Activated CD4-positive, alpha-beta memory T cell treated with anti-CD3 and anti-CD28 coated beads, Interleukin-2, amount 10 ng/mL, durations not matched to agents 7 days and 5 days (primary cell): ENCODE measurements at regions of chr11 and their contacts with region 1.

Region 1: DNA sequence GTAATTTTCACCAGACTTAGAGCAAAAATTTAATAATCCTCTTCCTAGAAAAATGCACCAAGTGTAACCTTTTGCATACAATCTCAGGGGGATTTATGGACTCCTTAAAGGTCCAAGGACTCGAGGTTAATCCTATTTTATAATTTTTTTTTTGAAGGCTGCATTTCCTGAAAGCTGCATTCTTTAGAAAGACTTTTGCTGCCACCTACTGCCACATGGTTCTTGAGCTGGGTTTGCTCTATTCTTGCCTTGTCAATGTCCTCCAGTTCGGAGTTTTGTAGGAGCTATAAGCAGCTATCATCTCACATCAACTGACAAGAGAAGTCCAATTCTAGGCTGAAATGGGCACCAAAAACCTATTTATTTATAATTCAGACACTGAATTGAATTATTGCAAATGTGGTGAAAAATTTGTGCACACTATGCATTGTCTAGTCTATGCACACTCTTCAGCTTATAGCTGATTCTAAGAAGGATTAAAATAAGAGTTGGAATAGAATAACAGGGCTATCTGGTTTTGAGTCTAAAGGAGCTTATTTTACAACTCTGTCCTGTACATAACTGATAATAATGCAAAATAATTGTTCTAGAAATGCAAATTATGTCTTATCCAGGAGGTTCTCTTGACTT is 31.3 kb downstream of the TRAF6 start:
- DNase-seq: peak; percentile 47
- H3K4me3 Mint-ChIP-seq: no peak overlapping the region
- H3K27ac Mint-ChIP-seq: no peak overlapping the region
- H3K4me1 Mint-ChIP-seq: peaks cover 6% of the 10 kb centered on the region
- H3K27me3 Mint-ChIP-seq: peaks cover 2% of the 10 kb centered on the region

Region 2: DNA sequence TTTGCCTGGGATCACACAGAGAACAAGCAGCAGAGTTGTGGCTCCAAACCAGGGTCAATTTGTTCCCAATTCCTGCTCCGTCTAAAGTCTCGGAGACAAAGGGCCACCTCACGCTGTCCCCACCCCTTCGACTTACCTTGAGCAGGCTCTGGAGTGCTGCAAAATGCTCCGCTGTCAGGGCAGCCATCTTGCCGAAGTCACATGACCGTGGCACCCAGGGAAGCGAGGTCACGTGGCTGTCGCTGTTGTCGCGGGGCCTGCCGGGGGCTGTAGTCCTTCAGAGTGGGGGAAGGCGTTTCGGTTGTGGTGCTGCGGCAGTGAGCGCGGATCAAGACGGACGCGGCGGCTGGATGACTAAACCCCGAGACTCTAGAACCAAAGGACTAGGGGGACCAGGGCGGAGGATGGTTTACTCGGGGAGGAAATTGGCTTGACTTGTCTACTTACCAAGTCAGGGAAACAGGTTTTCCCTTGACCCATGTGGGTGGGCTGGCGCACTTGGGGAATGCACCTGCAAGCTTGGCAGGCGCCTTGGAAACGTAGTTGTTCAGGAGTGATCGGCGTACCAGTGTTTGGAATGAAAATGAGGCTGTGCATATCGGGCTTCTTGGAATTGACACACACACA is 189.5 kb before region 1 on chr11 and contains the start of gene COMMD9:
- CTCF ChIA-PET with region 1: interaction called, 112 read pairs
- POLR2A ChIA-PET with region 1: interaction called, 4 read pairs
- DNase-seq: peak; percentile 96
- H3K4me3 Mint-ChIP-seq: peak within 1 kb of the TSS; percentile 87
- H3K27ac Mint-ChIP-seq: peak within 1 kb of the TSS; percentile 64
- H3K4me1 Mint-ChIP-seq: peaks cover 30% of the 10 kb centered on the region
- H3K27me3 Mint-ChIP-seq: no peaks in the 10 kb centered on the region
- total RNA-seq, gene COMMD9: 30.5 to 34.1 TPM

Region 3: GRCh38 chr11:36339888-36340287 is 138.9 kb before region 1 on chr11:
- CTCF ChIA-PET with region 1: interaction called, 11 read pairs
- POLR2A ChIA-PET with region 1: no interaction called
- DNase-seq: no peak
- H3K4me3 Mint-ChIP-seq: no peak overlapping the region
- H3K27ac Mint-ChIP-seq: no peak overlapping the region
- H3K4me1 Mint-ChIP-seq: peaks cover 1% of the 10 kb centered on the region
- H3K27me3 Mint-ChIP-seq: peaks cover 10% of the 10 kb centered on the region

Region 4: GRCh38 chr11:36376888-36377758 is 101.7 kb before region 1 on chr11:
- CTCF ChIA-PET with region 1: interaction called, 24 read pairs
- POLR2A ChIA-PET with region 1: interaction called, 5 read pairs
- DNase-seq: peak; percentile 81
- H3K4me3 Mint-ChIP-seq: peak overlapping the region; percentile 93
- H3K27ac Mint-ChIP-seq: peak overlapping the region; percentile 77
- H3K4me1 Mint-ChIP-seq: peaks cover 45% of the 10 kb centered on the region
- H3K27me3 Mint-ChIP-seq: peaks cover 37% of the 10 kb centered on the region